ENCODE measurements at regions of chr5 and their contacts with region 1.

Region 1: DNA sequence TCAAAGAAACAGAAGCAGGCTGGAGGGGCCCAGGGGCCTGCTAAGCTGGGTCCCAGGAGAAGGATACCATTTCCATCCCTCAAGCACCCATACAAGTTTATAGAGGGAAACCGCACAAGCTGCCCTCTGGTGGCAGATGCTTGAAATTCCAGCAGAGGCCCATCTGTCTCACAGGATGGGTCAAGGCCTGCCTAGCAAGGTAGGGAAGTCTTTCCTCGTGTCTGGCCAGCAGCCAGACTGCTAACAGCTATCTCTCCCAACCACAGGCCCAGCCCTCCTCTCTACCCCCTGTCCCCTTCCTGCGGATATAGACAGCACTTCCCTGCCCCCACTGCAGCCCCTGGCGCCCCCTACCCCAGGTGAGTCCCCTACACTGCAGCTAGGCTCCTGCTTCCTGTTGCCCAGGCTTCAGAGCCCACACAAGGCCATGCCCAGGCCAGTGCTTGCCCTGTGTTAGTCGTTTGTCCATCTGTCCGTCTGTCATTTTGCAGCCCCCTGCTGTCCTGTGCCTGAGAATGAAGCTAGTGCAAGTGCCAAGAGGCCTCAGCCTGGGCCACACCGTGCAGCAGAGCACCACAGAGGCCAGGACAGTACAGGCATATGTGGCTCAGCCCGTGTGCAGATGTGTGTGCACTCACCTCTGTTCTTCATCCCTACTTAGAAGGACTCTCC is 26.2 kb downstream of the TCF7 start:
- DNase-seq: peak; percentile 56
- H3K4me3 ChIP-seq: no peak overlapping the region
- H3K27ac ChIP-seq: no peak overlapping the region
- H3K4me1 ChIP-seq: peaks cover 36% of the 10 kb centered on the region
- H3K27me3 ChIP-seq: no peaks in the 10 kb centered on the region
- CTCF ChIP-seq: peak; percentile 85

Region 2: GRCh38 chr5:134041570-134042411 is 98.9 kb before region 1 on chr5:
- intact Hi-C with region 1: loop called (anchors 5 kb)
- DNase-seq: no peak
- H3K4me3 ChIP-seq: no peak overlapping the region
- H3K27ac ChIP-seq: no peak overlapping the region
- H3K4me1 ChIP-seq: no peaks in the 10 kb centered on the region
- H3K27me3 ChIP-seq: no peaks in the 10 kb centered on the region
- CTCF ChIP-seq: no peak

Region 3: GRCh38 chr5:134436523-134437339 is 296.1 kb after region 1 on chr5:
- intact Hi-C with region 1: no loop called
- DNase-seq: peak; percentile 62
- H3K4me3 ChIP-seq: peak overlapping the region; percentile 43
- H3K27ac ChIP-seq: peak overlapping the region; percentile 90
- H3K4me1 ChIP-seq: peaks cover 41% of the 10 kb centered on the region
- H3K27me3 ChIP-seq: no peaks in the 10 kb centered on the region
- CTCF ChIP-seq: no peak